ENCODE measurements at regions of chr14 and their contacts with region 1.

Region 1: GRCh38 chr14:95527387-95528002 is 7.4 kb upstream of the GLRX5 start:
- DNase-seq: peak in 4 of 5 donors; percentile 26 to 62 (median 40)
- H3K4me3 ChIP-seq: no peak overlapping the region
- H3K4me3 Mint-ChIP-seq: peak overlapping the region in 1 of 7 donors; percentile 2
- H3K27ac ChIP-seq: no peak overlapping the region
- H3K27ac Mint-ChIP-seq: peak overlapping the region in 7 of 8 donors; percentile 1 to 91 (median 39)
- H3K4me1 ChIP-seq: peaks cover 43% of the 10 kb centered on the region
- H3K4me1 Mint-ChIP-seq: peaks cover 51 to 81% (median 69%) of the 10 kb centered on the region in 3 donors
- H3K27me3 ChIP-seq: no peaks in the 10 kb centered on the region
- H3K27me3 Mint-ChIP-seq: no peaks in the 10 kb centered on the region

Region 2: GRCh38 chr14:95424529-95424928 is 103.0 kb before region 1 on chr14:
- CTCF ChIA-PET with region 1: interaction called, 26 read pairs
- POLR2A ChIA-PET with region 1: no interaction called
- DNase-seq: no peak
- H3K4me3 ChIP-seq: no peak overlapping the region
- H3K4me3 Mint-ChIP-seq: no peak overlapping the region
- H3K27ac ChIP-seq: no peak overlapping the region
- H3K27ac Mint-ChIP-seq: peak overlapping the region in 2 of 8 donors; percentile 10 to 21
- H3K4me1 ChIP-seq: no peaks in the 10 kb centered on the region
- H3K4me1 Mint-ChIP-seq: peaks cover 0 to 9% (median 2%) of the 10 kb centered on the region in 3 donors
- H3K27me3 ChIP-seq: no peaks in the 10 kb centered on the region
- H3K27me3 Mint-ChIP-seq: peaks cover 0 to 3% of the 10 kb centered on the region in 2 donors

Region 3: DNA sequence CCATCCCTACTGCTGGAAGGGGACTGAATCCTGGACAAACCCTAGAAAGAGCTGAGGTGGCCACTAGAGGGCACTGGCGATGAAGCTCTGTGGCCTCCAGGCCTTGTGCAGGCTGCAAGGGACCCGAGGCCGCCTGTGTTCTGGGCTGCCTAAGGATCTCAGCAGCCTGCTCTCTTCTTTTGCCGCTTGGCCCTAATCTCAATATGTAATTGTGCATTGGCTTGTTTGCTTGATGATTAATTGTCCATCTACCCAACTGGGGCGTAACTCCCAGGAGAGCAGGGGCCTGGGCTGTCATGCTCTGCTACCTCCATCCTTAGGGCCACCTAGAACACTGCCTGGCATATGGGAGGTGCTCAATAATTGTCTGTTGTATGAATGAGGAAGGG is 84.9 kb before region 1 on chr14:
- CTCF ChIA-PET with region 1: interaction called, 110 read pairs
- POLR2A ChIA-PET with region 1: interaction called, 3 read pairs
- DNase-seq: peak; percentile 46 to 79 (median 58)
- H3K4me3 ChIP-seq: no peak overlapping the region
- H3K4me3 Mint-ChIP-seq: no peak overlapping the region
- H3K27ac ChIP-seq: no peak overlapping the region
- H3K27ac Mint-ChIP-seq: peak overlapping the region in 4 of 8 donors; percentile 17 to 85 (median 64)
- H3K4me1 ChIP-seq: peaks cover 5% of the 10 kb centered on the region
- H3K4me1 Mint-ChIP-seq: peaks cover 3 to 5% (median 4%) of the 10 kb centered on the region in 3 donors
- H3K27me3 ChIP-seq: no peaks in the 10 kb centered on the region
- H3K27me3 Mint-ChIP-seq: peaks cover 0 to 2% of the 10 kb centered on the region in 2 donors

Region 4: GRCh38 chr14:95452176-95452892 is 75.2 kb before region 1 on chr14:
- CTCF ChIA-PET with region 1: interaction called, 110 read pairs
- POLR2A ChIA-PET with region 1: interaction called, 5 read pairs
- DNase-seq: no peak
- H3K4me3 ChIP-seq: no peak overlapping the region
- H3K4me3 Mint-ChIP-seq: no peak overlapping the region
- H3K27ac ChIP-seq: no peak overlapping the region
- H3K27ac Mint-ChIP-seq: no peak overlapping the region
- H3K4me1 ChIP-seq: no peaks in the 10 kb centered on the region
- H3K4me1 Mint-ChIP-seq: no peaks in the 10 kb centered on the region
- H3K27me3 ChIP-seq: no peaks in the 10 kb centered on the region
- H3K27me3 Mint-ChIP-seq: no peaks in the 10 kb centered on the region

Region 5: DNA sequence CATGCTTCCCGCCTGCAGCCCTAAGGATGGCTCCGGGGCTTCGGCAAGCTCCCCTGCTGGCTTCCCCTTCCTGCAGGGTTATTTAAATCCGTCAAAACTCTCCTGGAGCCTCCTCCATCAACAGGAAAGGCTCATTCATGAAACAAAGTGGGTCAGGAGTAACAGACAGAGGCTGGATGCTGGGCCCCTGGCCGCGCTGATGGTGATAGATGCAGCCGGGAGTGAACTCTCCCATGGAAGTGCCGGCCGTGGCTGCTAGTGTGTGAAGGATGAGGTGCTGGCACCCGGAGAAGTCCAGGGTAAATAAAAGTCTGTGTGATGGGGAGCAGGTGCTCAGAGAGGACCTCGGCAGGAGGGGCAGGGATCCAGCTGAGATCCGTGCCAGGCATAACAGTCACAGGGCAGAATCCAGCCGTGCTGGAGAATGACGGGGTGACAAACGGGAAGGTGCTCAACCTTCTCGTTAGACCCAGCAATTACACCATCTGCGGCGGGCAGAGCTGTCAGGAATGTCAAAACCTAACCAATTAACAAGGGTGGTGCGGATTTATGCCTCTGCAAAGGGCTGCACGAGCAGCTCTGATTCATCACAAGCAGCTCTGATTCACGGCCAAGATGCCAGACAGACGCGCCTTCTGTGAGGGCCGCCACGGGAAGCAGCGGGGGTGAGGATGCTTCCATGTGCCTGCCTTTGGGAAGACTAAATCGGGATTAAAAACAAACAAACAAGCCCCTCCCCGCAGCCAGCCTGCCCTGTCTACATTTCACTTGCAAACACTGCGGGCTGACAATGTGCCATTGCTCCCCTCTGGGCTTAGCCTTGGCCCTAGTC is 66.6 kb before region 1 on chr14:
- CTCF ChIA-PET with region 1: interaction called, 23 read pairs
- POLR2A ChIA-PET with region 1: no interaction called
- DNase-seq: no peak
- H3K4me3 ChIP-seq: no peak overlapping the region
- H3K4me3 Mint-ChIP-seq: no peak overlapping the region
- H3K27ac ChIP-seq: no peak overlapping the region
- H3K27ac Mint-ChIP-seq: peak overlapping the region in 7 of 8 donors; percentile 54 to 98 (median 94)
- H3K4me1 ChIP-seq: peaks cover 57% of the 10 kb centered on the region
- H3K4me1 Mint-ChIP-seq: peaks cover 42 to 57% (median 44%) of the 10 kb centered on the region in 3 donors
- H3K27me3 ChIP-seq: no peaks in the 10 kb centered on the region
- H3K27me3 Mint-ChIP-seq: no peaks in the 10 kb centered on the region

Region 6: GRCh38 chr14:95507701-95508103 is 19.8 kb before region 1 on chr14:
- CTCF ChIA-PET with region 1: interaction called, 10 read pairs
- POLR2A ChIA-PET with region 1: no interaction called
- DNase-seq: peak in 1 of 5 donors; percentile 19
- H3K4me3 ChIP-seq: no peak overlapping the region
- H3K4me3 Mint-ChIP-seq: peak overlapping the region in 4 of 7 donors; percentile 13 to 48 (median 27)
- H3K27ac ChIP-seq: no peak overlapping the region
- H3K27ac Mint-ChIP-seq: peak overlapping the region; percentile 32 to 96 (median 74)
- H3K4me1 ChIP-seq: peaks cover 65% of the 10 kb centered on the region
- H3K4me1 Mint-ChIP-seq: peaks cover 64 to 88% (median 77%) of the 10 kb centered on the region in 3 donors
- H3K27me3 ChIP-seq: no peaks in the 10 kb centered on the region
- H3K27me3 Mint-ChIP-seq: no peaks in the 10 kb centered on the region

Region 7: GRCh38 chr14:95515596-95516552 is 11.6 kb before region 1 on chr14:
- CTCF ChIA-PET with region 1: interaction called, 22 read pairs
- POLR2A ChIA-PET with region 1: interaction called, 4 read pairs
- DNase-seq: peak; percentile 79 to 86 (median 81)
- H3K4me3 ChIP-seq: peak overlapping the region; percentile 64
- H3K4me3 Mint-ChIP-seq: peak overlapping the region; percentile 91 to 95 (median 93)
- H3K27ac ChIP-seq: peak overlapping the region; percentile 44
- H3K27ac Mint-ChIP-seq: peak overlapping the region; percentile 85 to 98 (median 96)
- H3K4me1 ChIP-seq: peaks cover 68% of the 10 kb centered on the region
- H3K4me1 Mint-ChIP-seq: peaks cover 66 to 83% (median 75%) of the 10 kb centered on the region in 3 donors
- H3K27me3 ChIP-seq: no peaks in the 10 kb centered on the region
- H3K27me3 Mint-ChIP-seq: no peaks in the 10 kb centered on the region

Region 8: DNA sequence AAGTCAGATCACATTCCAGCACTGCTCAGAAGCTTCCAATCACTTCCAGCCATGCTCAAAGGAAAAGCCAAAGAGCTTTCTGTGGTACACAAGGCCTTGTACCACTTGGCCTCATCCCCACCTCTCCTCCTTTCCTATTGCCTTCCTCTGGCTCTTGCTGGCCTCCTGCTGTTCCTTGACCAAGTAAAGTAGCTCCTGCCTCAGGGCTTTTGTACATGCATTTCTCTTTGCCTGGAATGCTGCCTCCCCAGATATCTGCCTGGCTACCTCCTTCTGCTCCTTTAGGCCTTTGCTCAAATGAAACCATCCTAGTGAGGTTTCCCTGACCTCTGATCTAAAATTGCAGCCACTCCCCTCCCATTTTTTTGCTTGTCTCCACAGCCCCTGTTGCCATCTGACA is 107.6 kb after region 1 on chr14:
- CTCF ChIA-PET with region 1: no interaction called
- POLR2A ChIA-PET with region 1: no interaction called
- DNase-seq: no peak
- H3K4me3 ChIP-seq: no peak overlapping the region
- H3K4me3 Mint-ChIP-seq: no peak overlapping the region
- H3K27ac ChIP-seq: no peak overlapping the region
- H3K27ac Mint-ChIP-seq: no peak overlapping the region
- H3K4me1 ChIP-seq: no peaks in the 10 kb centered on the region
- H3K4me1 Mint-ChIP-seq: no peaks in the 10 kb centered on the region
- H3K27me3 ChIP-seq: no peaks in the 10 kb centered on the region
- H3K27me3 Mint-ChIP-seq: peaks cover 16 to 41% of the 10 kb centered on the region in 2 donors